ENCODE measurements at regions of chr9 and their contacts with region 1.

Region 1: GRCh38 chr9:114405294-114406034 is 17.7 kb upstream of the AKNA start:
- DNase-seq: peak; percentile 65 to 93 (median 86)

Region 2: DNA sequence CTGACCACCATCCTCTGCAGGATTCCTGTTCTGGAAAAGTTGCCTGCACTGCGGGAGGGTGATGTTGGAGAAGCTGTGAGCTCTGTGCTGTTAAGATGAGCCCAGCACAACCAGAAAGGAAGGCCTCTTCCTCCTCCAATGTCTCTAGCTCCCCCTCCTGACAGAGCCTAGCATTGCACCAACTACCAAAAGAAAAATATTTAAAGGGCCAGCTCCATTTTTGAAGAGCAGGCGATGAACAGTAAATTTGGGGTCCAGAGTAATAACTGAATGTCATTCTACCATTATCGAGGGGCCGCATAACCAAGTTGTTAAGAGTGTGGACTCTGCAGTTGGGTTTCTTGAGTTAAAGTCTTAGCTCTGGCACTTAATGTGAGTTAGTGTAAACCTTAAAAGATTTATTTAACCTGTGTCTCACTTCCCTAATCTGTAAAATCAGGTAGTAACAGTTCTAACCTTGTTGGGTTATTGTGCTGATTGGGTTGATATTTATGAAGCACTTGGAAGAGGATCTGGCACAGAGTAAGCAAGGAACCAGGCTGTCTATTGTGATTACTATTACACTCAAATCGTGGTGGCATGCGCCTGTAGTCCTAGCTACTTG is 248.2 kb after region 1 on chr9:
- intact Hi-C with region 1: loop called (anchors 5 kb)
- DNase-seq: peak in 39 of 42 donors; percentile 37 to 90 (median 76)